SK-N-SH (cell line): ENCODE measurements at regions of chr14 and their contacts with region 1.

Region 1: GRCh38 chr14:32244404-32244803 is 41.3 kb upstream of the RNU6-8 start:
- DNase-seq: no peak
- H3K4me3 ChIP-seq: no peak overlapping the region
- H3K27ac ChIP-seq: no peak overlapping the region
- H3K4me1 ChIP-seq: peaks cover 0 to 4% of the 10 kb centered on the region in 2 experiments; a peak in 1 of 4 replicates
- H3K27me3 ChIP-seq: no peaks in the 10 kb centered on the region
- CTCF ChIP-seq: peak; percentile 25
- EP300 ChIP-seq: no peak
- RAD21 ChIP-seq: peak; percentile 49

Region 2: DNA sequence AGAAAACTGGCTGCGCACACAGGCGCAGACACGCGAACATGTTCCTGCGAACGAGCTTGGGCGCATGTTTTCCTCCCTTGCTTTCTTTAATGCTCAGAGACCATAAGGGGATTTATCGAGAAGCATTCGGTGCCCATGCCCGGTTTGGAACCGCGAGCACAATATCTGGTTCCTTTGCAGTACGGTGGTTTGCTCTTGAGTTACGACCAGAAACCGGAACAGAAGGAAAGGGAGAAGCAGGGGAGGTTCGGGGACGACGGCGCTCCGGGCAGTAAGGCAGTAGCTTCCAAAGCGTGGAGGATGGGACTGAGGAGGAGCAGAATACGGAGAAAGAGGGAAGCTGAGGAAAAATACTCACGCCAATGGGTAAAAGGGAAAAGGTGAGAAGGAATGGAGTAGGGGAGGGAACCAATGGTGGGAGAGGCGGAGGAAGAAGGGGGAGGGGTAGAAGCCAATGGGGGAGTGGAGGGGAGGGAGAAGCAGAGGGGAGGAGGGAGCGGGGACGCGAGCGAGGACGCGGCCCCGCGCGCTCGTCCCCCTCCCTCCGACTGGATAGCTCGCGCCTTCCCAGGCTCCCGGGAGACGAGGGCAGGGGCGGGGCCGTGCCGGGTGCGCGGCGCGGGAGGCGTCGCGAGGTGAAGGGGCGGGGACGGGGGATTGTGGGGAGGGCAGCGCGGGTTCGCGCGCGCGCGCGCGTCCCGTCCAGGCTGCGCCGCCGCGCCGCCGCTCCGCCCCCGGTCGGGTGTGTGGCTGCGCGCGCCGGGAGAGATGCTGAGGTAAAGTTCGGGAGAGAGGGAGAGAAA is 167.9 kb before region 1 on chr14:
- CTCF ChIA-PET with region 1: interaction called, 16 read pairs
- POLR2A ChIA-PET with region 1: no interaction called
- DNase-seq: peak; percentile 94
- H3K4me3 ChIP-seq: peak overlapping the region; percentile 85 to 96
- H3K27ac ChIP-seq: peak overlapping the region; percentile 97 to 98
- H3K4me1 ChIP-seq: peaks cover 2 to 4% of the 10 kb centered on the region in 2 experiments; a peak in 1 of 4 replicates
- H3K27me3 ChIP-seq: no peaks in the 10 kb centered on the region
- CTCF ChIP-seq: no peak
- EP300 ChIP-seq: no peak
- RAD21 ChIP-seq: no peak

Region 3: GRCh38 chr14:32167907-32168306 is 76.5 kb before region 1 on chr14:
- CTCF ChIA-PET with region 1: no interaction called
- POLR2A ChIA-PET with region 1: no interaction called
- DNase-seq: no peak
- H3K4me3 ChIP-seq: no peak overlapping the region
- H3K27ac ChIP-seq: no peak overlapping the region
- H3K4me1 ChIP-seq: no peaks in the 10 kb centered on the region
- H3K27me3 ChIP-seq: no peaks in the 10 kb centered on the region
- CTCF ChIP-seq: no peak
- EP300 ChIP-seq: no peak
- RAD21 ChIP-seq: no peak

Region 4: GRCh38 chr14:32202998-32203882 is 41.2 kb before region 1 on chr14 and contains the start of gene RNU6-8:
- CTCF ChIA-PET with region 1: no interaction called
- POLR2A ChIA-PET with region 1: no interaction called
- DNase-seq: peak; percentile 95
- H3K4me3 ChIP-seq: peak within 1 kb of the TSS; percentile 78
- H3K27ac ChIP-seq: peak within 1 kb of the TSS; percentile 59 to 95
- H3K4me1 ChIP-seq: peaks cover 0 to 6% of the 10 kb centered on the region in 2 experiments; a peak in 2 of 4 replicates
- H3K27me3 ChIP-seq: no peaks in the 10 kb centered on the region
- CTCF ChIP-seq: no peak
- EP300 ChIP-seq: no peak
- RAD21 ChIP-seq: no peak
- polyA plus RNA-seq, gene RNU6-8: not detected in 2 replicates